Transverse colon (tissue), 4 donors: ENCODE measurements at regions of chr18 and their contacts with region 1.

Region 1: GRCh38 chr18:72811047-72811446 is 56.7 kb downstream of the NETO1 start:
- DNase-seq: no peak
- H3K4me3 ChIP-seq: no peak overlapping the region
- H3K27ac ChIP-seq: no peak overlapping the region
- H3K4me1 ChIP-seq: no peaks in the 10 kb centered on the region
- H3K27me3 ChIP-seq: no peaks in the 10 kb centered on the region
- CTCF ChIP-seq: no peak
- EP300 ChIP-seq: no peak
- POLR2A ChIP-seq: no peak

Region 2: DNA sequence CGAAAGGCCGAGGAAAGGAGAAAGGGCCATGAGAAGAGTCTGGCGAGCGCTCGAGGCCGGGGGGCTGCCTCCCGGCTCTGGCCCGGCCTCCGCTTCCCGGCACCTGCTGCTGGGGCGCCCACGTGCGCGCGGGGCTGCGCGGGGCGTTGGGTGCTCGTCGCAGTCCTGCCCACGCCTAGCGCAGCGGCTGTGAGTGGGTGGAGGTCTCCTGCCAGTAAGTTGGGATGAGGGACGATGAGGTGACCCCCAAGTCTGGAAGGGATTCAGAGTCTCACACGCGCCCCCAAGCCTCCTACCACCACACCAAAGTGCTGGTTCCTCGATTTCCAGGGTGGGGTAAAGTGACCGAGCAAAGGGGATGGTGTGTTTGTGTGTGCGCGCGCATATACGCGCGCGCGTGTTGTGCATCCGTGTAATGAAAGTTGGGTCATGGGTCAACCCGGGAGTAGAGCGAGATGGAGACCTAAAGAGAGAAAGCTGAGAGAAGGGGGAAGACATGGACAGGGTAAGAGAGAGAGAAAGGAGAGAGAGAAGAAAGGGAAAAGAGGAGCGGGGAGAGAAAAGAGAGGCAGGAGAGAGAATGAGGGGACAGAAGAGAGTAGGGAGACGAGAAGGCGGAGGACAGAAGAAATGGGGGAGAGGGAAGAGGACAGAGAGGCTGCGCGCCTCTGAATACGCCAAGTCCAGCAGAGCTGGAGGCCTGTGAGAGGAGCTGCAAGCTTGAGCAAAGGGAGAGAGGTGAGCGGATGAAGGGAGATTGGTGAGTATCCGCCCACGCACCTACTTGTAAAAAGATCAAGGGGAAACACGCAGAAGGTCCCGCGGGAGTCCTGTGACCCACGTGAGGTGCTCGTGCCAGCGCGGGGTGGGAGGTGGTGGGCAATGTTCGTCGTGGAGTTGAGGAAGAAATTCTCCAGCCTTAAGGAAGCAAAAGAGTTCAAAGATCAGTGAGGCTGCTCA is 58.5 kb after region 1 on chr18:
- in situ Hi-C with region 1: loop called in 1 of 4 experiments (anchors 10 kb)
- intact Hi-C with region 1: no loop called
- DNase-seq: no peak
- H3K4me3 ChIP-seq: no peak overlapping the region
- H3K27ac ChIP-seq: no peak overlapping the region
- H3K4me1 ChIP-seq: no peaks in the 10 kb centered on the region
- H3K27me3 ChIP-seq: peaks cover 41% of the 10 kb centered on the region
- CTCF ChIP-seq: no peak
- EP300 ChIP-seq: no peak
- POLR2A ChIP-seq: no peak